ENCODE measurements at regions of chr2 and their contacts with region 1.

Region 1: GRCh38 chr2:240586198-240586918 is at the start of gene CAPN10:
- DNase-seq: peak; percentile 91 to 99 (median 95)
- ATAC-seq: peak; percentile 89 to 92 (median 90)
- H3K4me3 ChIP-seq: peak within 1 kb of the TSS; percentile 76 to 96
- H3K4me3 Mint-ChIP-seq: peak within 1 kb of the TSS; percentile 92 to 94 (median 94)
- H3K27ac ChIP-seq: peak within 1 kb of the TSS; percentile 84
- H3K27ac Mint-ChIP-seq: peak within 1 kb of the TSS; percentile 93
- H3K4me1 ChIP-seq: peaks cover 19 to 50% of the 10 kb centered on the region in 2 experiments
- H3K4me1 Mint-ChIP-seq: peaks cover 43 to 61% (median 60%) of the 10 kb centered on the region in 3 donors
- H3K27me3 ChIP-seq: no peaks in the 10 kb centered on the region
- H3K27me3 Mint-ChIP-seq: no peaks in the 10 kb centered on the region
- total RNA-seq, gene CAPN10: 73.3 to 107 (median 96.1) TPM

Region 2: GRCh38 chr2:240560480-240561326 is 25.7 kb before region 1 on chr2:
- CTCF ChIA-PET with region 1: interaction called, 4 to 51 read pairs
- POLR2A ChIA-PET with region 1: interaction called in 1 of 2 experiments, 15 read pairs
- DNase-seq: peak; percentile 96 to 100 (median 99)
- ATAC-seq: peak; percentile 58 to 67 (median 63)
- H3K4me3 ChIP-seq: peak overlapping the region; percentile 65 to 71
- H3K4me3 Mint-ChIP-seq: peak overlapping the region; percentile 80 to 87 (median 87)
- H3K27ac ChIP-seq: peak overlapping the region; percentile 73
- H3K27ac Mint-ChIP-seq: peak overlapping the region; percentile 92 to 99
- H3K4me1 ChIP-seq: peaks cover 39 to 88% of the 10 kb centered on the region in 2 experiments
- H3K4me1 Mint-ChIP-seq: peaks cover 72 to 79% (median 77%) of the 10 kb centered on the region in 3 donors
- H3K27me3 ChIP-seq: no peaks in the 10 kb centered on the region
- H3K27me3 Mint-ChIP-seq: no peaks in the 10 kb centered on the region

Region 3: GRCh38 chr2:240622531-240623235 is 36.3 kb after region 1 on chr2:
- CTCF ChIA-PET with region 1: interaction called in 1 of 2 experiments, 16 read pairs
- POLR2A ChIA-PET with region 1: interaction called in 1 of 2 experiments, 5 read pairs
- DNase-seq: peak in 30 of 35 experiments; percentile 23 to 82 (median 62)
- ATAC-seq: peak; percentile 14 to 59 (median 40)
- H3K4me3 ChIP-seq: peak overlapping the region; percentile 11 to 30
- H3K4me3 Mint-ChIP-seq: peak overlapping the region in 2 of 3 donors; percentile 21 to 85
- H3K27ac ChIP-seq: peak overlapping the region; percentile 96
- H3K27ac Mint-ChIP-seq: peak overlapping the region; percentile 88 to 96
- H3K4me1 ChIP-seq: peaks cover 47 to 84% of the 10 kb centered on the region in 2 experiments
- H3K4me1 Mint-ChIP-seq: peaks cover 49 to 61% (median 58%) of the 10 kb centered on the region in 3 donors
- H3K27me3 ChIP-seq: no peaks in the 10 kb centered on the region
- H3K27me3 Mint-ChIP-seq: no peaks in the 10 kb centered on the region